A673 (cell line): ENCODE measurements at regions of chr11 and their contacts with region 1.

Region 1: GRCh38 chr11:110356756-110357671 is 60.6 kb upstream of the RDX start:
- DNase-seq: peak; percentile 82
- H3K4me3 ChIP-seq: peak overlapping the region; percentile 52
- H3K27ac ChIP-seq: peak overlapping the region; percentile 99
- H3K4me1 ChIP-seq: peaks cover 13% of the 10 kb centered on the region
- H3K27me3 ChIP-seq: no peaks in the 10 kb centered on the region
- CTCF ChIP-seq: no peak

Region 2: DNA sequence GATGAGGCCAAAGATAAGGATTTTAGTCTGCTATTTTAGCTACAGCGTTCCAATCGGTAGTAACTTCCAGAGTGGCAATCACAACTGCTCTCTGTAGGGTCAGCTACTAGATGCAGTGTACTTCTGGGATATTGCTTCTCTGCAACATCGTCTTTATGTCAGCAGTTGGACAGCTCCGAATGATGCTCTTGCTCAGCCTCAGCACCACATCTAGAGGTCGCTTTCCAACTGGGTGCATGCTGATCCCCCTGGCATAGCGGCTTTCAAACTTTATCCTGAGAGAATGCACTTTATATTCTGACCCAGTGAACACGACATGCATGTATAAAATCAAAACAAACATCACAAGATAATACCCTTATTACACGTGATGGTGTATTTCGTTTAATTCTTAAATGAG is 715.5 kb before region 1 on chr11:
- CTCF ChIA-PET with region 1: no interaction called
- POLR2A ChIA-PET with region 1: no interaction called
- intact Hi-C with region 1: no loop called
- DNase-seq: peak; percentile 67
- H3K4me3 ChIP-seq: no peak overlapping the region
- H3K27ac ChIP-seq: no peak overlapping the region
- H3K4me1 ChIP-seq: peaks cover 6% of the 10 kb centered on the region
- H3K27me3 ChIP-seq: peaks cover 21% of the 10 kb centered on the region
- CTCF ChIP-seq: peak; percentile 48

Region 3: DNA sequence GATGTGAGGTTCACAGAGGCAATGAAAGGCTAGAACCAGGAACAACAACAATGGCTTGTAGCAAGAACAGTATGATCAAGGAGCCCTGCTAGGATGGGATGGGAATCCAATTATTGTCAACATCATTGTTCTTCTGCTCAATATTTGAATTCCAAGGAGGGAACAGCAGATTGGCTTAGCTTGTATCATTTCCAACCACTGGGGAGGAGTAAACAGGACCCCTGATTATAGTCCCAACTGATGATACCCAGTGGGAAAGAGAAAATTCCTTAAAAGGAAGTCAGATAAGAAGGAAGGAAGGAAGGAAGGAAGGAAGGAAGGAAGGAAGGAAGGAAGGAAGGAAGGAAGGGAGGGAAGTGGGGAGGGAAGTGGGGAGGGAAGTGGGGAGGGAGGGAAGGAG is 333.3 kb before region 1 on chr11:
- CTCF ChIA-PET with region 1: no interaction called
- POLR2A ChIA-PET with region 1: interaction called, 3 read pairs
- intact Hi-C with region 1: loop called (anchors 1 kb)
- DNase-seq: peak; percentile 89
- H3K4me3 ChIP-seq: no peak overlapping the region
- H3K27ac ChIP-seq: peak overlapping the region; percentile 72
- H3K4me1 ChIP-seq: peaks cover 31% of the 10 kb centered on the region
- H3K27me3 ChIP-seq: no peaks in the 10 kb centered on the region
- CTCF ChIP-seq: no peak

Region 4: DNA sequence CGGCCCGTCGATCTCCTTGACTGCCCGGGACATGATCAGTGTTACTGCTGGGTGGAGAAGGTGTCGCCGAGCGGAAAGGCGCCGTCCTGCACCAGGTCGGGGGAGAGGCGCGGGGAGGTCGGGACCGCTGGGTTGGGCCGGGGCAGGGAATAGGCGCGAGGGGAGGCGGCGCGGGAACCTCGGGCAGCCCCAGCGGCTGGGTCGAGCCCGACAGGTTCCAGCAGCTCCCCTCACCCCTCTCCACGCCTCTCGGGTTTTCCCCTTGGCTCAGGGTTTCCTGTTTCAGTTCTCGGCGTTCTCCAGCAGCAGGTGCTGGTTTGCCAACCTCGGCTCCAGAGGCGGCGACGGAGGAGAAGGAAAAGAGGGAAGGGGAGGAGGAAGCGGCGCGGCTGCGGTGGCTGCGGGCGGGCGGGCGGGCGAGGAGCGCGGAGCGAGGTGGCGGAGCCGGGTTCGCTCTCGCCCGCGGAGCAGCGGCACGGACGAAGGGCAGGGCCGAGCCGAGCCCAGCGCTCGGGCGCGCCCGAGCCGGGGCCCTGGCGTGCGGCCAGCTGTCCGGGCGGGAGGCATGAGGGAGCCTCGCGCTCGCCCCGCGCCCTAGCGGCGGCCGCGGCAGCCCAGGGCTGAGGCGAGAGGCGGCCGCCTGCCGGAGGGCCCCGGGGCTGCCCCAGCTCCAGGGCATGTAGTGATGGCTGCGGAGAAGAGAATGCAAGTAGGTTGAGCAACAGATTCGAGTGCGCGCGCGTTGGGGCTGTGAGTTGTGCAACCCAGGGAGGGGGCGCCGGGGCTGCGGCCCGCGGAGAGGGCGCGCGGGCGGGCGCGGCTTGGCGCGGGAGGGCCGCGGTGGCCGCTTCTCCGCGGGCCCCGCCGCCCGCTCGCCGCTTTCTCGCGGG is 264.3 kb before region 1 on chr11 and contains the start of gene ZC3H12C:
- CTCF ChIA-PET with region 1: no interaction called
- POLR2A ChIA-PET with region 1: no interaction called
- intact Hi-C with region 1: loop called (anchors 10 kb)
- DNase-seq: peak; percentile 97
- H3K4me3 ChIP-seq: peak within 1 kb of the TSS; percentile 77
- H3K27ac ChIP-seq: peak within 1 kb of the TSS; percentile 95
- H3K4me1 ChIP-seq: peaks cover 38% of the 10 kb centered on the region
- H3K27me3 ChIP-seq: no peaks in the 10 kb centered on the region
- CTCF ChIP-seq: peak; percentile 53; the same call in 1 of the 2 replicates
- total RNA-seq, gene ZC3H12C: 18.7 and 21.7 TPM in 2 replicates

Region 5: GRCh38 chr11:110296226-110297075 is 60.6 kb before region 1 on chr11 and contains the start of gene RDX:
- CTCF ChIA-PET with region 1: no interaction called
- POLR2A ChIA-PET with region 1: interaction called, 7 read pairs
- intact Hi-C with region 1: loop called (anchors 2 kb)
- DNase-seq: peak; percentile 97
- H3K4me3 ChIP-seq: peak within 1 kb of the TSS; percentile 86
- H3K27ac ChIP-seq: peak within 1 kb of the TSS; percentile 97
- H3K4me1 ChIP-seq: peaks cover 20% of the 10 kb centered on the region
- H3K27me3 ChIP-seq: no peaks in the 10 kb centered on the region
- CTCF ChIP-seq: no peak
- total RNA-seq, gene RDX: 381 and 395 TPM in 2 replicates

Region 6: DNA sequence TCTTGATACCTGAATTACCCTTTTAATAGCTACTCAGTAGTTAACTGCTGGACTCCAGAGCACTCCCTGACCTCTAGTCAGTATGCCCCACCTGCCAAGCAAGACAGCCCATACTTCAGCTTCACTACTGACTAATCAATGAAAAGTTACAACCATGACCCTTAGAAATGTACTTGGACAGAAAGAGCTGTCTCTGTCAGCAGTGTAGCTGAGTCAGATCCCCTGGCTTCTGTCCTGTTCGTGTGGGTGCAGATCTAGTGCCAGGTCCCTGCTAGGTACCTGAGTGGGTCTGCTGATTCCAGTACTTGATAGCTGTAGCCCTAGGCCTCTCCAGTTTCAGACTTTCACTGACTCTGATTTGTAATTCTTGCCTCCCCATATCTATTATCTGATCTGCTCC is 622.7 kb after region 1 on chr11:
- CTCF ChIA-PET with region 1: no interaction called
- POLR2A ChIA-PET with region 1: no interaction called
- intact Hi-C with region 1: loop called (anchors 1 kb)
- DNase-seq: no peak
- H3K4me3 ChIP-seq: no peak overlapping the region
- H3K27ac ChIP-seq: no peak overlapping the region
- H3K4me1 ChIP-seq: peaks cover 10% of the 10 kb centered on the region
- H3K27me3 ChIP-seq: no peaks in the 10 kb centered on the region
- CTCF ChIP-seq: no peak